Endothelial cell of umbilical vein (primary cell): ENCODE measurements at regions of chr5 and their contacts with region 1.

Region 1: DNA sequence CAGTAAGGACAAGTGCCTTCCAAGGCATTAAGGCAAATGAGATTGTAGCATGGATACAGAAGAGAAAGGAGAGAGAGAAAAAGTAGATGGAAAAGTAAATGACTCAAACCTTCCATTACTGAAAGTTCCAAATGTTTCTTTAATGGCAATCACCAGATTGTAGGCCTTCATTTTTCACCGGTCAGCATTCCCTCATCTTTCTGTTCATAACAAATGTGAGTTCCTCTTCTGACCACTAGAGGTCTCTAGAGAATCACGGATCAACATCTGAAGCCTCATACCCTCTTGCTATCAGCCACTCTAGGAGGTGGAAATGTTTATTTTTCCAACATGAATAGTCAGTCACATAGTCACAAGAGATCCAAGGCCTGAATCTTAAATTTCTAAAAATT is 73.6 kb upstream of the RPS23 start:
- DNase-seq: peak; percentile 85
- H3K4me3 ChIP-seq: no peak overlapping the region
- H3K27ac ChIP-seq: peak overlapping the region; percentile 63
- H3K4me1 ChIP-seq: peaks cover 28% of the 10 kb centered on the region
- H3K27me3 ChIP-seq: no peaks in the 10 kb centered on the region
- CTCF ChIP-seq: peak; percentile 54 to 58
- POLR2A ChIP-seq: no peak

Region 2: DNA sequence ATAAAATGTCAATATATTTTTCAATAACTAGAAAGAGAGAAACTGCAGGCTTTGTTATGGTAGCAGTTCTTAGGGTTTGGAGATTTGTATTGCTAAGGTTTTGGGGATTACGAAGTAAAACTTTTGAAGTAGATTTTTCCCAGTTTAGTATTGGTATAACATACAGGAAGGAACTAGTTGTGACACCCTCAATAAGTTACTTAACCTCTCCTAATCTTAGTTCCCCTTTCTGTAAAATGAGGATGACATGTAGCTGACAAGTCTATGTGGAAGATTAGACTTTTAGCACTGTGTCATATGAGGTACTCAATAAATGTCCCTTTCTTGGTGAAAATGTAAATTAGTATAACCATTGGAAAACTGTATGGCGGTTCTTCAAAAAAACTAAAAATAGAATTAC is 453.3 kb before region 1 on chr5:
- CTCF ChIA-PET with region 1: no interaction called
- POLR2A ChIA-PET with region 1: no interaction called
- dilution Hi-C with region 1: no loop called
- intact Hi-C with region 1: no loop called
- DNase-seq: no peak
- H3K4me3 ChIP-seq: no peak overlapping the region
- H3K27ac ChIP-seq: no peak overlapping the region
- H3K4me1 ChIP-seq: no peaks in the 10 kb centered on the region
- H3K27me3 ChIP-seq: peaks cover 0 to 3% of the 10 kb centered on the region in 2 experiments
- CTCF ChIP-seq: no peak
- POLR2A ChIP-seq: no peak

Region 3: DNA sequence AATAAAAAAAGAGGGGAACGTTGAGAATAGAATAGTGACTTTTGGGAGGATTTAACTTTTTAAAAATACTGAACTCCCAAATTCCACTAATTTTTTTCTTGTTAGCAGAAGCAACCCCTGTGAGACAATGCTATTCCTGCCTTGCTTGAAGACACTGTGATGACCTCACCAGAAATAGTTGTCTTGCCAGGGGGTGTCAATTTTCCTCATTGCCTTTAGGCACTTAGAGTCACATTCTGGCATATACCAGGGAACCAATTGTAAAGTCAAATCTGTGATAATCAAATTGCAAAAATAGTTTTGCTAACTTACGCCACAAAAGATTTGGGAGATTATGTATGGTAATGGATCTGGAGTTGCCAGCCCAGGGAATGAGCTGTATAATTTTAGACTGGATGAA is 30.8 kb before region 1 on chr5:
- CTCF ChIA-PET with region 1: no interaction called
- POLR2A ChIA-PET with region 1: no interaction called
- dilution Hi-C with region 1: no loop called
- intact Hi-C with region 1: no loop called
- DNase-seq: no peak
- H3K4me3 ChIP-seq: no peak overlapping the region
- H3K27ac ChIP-seq: no peak overlapping the region
- H3K4me1 ChIP-seq: no peaks in the 10 kb centered on the region
- H3K27me3 ChIP-seq: peaks cover 22 to 26% of the 10 kb centered on the region in 2 experiments
- CTCF ChIP-seq: no peak
- POLR2A ChIP-seq: no peak

Region 4: DNA sequence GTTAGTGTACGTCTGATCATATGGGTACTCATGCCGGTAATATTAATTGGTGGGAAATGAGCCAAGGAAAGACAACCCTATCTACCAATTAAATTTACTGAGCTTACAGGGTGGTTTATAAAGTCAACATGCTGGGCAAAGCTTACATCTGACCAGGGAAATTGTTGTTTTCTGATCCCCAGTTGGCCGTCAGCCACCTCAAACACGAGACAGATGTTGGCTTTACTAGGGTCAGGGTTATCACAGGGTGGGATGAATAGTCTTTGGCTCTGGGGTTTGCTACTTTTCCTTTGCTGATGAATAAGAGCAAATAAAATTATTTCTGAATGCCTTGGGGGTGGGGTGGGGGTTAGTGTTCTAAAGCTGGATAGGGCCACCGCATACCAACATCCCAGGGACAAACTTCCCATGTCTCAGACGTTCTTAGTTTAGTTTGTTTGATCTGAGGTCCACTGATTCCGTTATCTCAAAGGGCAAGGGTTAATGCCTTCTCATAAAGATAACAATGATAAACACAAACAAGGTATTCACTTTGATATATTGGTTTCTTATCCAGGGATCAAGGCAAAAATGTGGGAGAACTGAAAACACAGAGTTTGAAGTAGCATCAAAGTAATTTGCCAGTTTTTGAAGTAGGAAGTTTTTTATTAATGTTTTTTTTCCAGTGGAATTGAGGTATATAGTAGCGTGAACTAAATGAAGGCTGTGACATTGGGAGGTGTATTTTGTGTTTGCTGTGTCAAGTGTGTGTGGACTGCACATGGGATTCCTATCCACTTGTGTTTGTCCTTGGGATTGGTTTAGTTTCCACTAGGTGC is 35.5 kb after region 1 on chr5:
- CTCF ChIA-PET with region 1: interaction called, 6 read pairs
- POLR2A ChIA-PET with region 1: no interaction called
- dilution Hi-C with region 1: no loop called
- intact Hi-C with region 1: loop called (anchors 1 kb)
- DNase-seq: peak; percentile 99
- H3K4me3 ChIP-seq: no peak overlapping the region
- H3K27ac ChIP-seq: peak overlapping the region; percentile 59
- H3K4me1 ChIP-seq: peaks cover 39% of the 10 kb centered on the region
- H3K27me3 ChIP-seq: no peaks in the 10 kb centered on the region
- CTCF ChIP-seq: no peak
- POLR2A ChIP-seq: no peak

Region 5: DNA sequence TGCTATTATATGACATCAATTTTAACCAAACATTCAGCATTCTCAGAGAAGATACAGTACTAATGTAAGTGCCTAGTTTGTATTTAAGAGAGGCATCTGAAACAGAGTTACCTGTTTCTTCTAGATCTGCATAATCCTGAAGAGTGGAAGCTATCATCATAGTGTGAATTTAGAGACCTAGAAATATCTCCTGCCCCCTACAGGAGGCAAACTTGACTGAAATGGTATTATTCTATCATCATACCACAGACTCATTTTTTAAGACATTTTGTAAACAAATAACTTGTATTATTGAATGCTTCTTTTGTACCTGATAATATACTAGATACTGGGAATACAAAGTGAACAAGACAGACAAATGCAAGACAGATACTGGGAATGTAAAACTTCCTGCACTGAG is 143.2 kb after region 1 on chr5:
- CTCF ChIA-PET with region 1: interaction called, 8 read pairs
- POLR2A ChIA-PET with region 1: no interaction called
- dilution Hi-C with region 1: no loop called
- intact Hi-C with region 1: loop called (anchors 1 kb)
- DNase-seq: peak; percentile 30
- H3K4me3 ChIP-seq: no peak overlapping the region
- H3K27ac ChIP-seq: no peak overlapping the region
- H3K4me1 ChIP-seq: no peaks in the 10 kb centered on the region
- H3K27me3 ChIP-seq: peaks cover 0 to 2% of the 10 kb centered on the region in 2 experiments
- CTCF ChIP-seq: peak in 1 of 2 donors; percentile 6
- POLR2A ChIP-seq: no peak

Region 6: DNA sequence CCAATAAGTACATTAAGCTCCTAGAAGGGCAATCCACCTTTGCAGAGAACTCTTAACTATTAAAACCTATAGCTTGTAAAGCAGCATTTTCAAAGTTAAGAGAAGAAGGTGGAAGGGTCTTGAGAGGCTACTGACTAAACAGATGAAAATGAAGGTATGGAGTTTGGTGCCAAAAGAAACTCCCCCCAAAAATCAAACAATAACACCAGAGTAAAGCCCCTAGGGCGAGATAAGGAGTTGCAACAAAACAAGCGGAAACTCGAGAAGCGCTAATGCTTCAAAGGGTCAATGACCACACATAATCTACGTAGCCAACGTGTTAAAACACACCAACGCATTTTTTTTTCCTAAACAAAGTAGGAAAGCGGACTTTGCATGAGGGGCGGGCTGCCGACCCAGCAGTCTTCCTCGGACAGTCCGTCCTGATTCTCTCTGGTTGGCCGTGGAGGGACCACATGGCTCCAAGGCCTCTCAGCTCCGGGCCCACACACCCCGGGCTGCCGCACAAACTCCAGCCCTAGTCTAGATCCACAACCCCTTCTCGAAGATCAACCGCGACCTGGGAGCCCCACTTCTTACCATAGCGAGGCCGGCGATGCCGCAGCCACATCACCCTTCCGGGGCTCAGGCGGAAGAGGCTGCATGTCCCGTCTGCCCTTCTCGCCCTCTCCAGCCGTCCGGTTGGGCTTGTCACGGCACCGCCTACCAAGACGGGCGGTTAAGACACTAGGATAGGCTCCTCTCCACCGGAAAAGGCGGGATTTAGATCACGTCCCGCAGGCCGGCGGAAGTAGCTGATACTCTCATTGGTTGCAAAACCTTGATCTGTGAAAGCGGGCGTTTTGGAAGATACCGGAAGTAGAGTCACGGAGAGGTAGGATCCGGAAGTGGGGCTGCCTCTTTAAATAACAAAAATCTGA is 725.3 kb after region 1 on chr5 and contains the starts of genes TMEM167A and XRCC4:
- CTCF ChIA-PET with region 1: no interaction called
- POLR2A ChIA-PET with region 1: no interaction called
- dilution Hi-C with region 1: no loop called
- intact Hi-C with region 1: loop called (anchors 2 kb)
- DNase-seq: peak; percentile 97
- H3K4me3 ChIP-seq: peak within 1 kb of the TSS; percentile 69 to 98 (median 93)
- H3K27ac ChIP-seq: peak within 1 kb of the TSS; percentile 85
- H3K4me1 ChIP-seq: peaks cover 14% of the 10 kb centered on the region
- H3K27me3 ChIP-seq: no peaks in the 10 kb centered on the region
- CTCF ChIP-seq: no peak
- POLR2A ChIP-seq: peak; percentile 77
- total RNA-seq, gene TMEM167A: 64.4 and 69.4 TPM in 2 replicates
- total RNA-seq, gene XRCC4: 7.6 and 7.7 TPM in 2 replicates

Region 7: DNA sequence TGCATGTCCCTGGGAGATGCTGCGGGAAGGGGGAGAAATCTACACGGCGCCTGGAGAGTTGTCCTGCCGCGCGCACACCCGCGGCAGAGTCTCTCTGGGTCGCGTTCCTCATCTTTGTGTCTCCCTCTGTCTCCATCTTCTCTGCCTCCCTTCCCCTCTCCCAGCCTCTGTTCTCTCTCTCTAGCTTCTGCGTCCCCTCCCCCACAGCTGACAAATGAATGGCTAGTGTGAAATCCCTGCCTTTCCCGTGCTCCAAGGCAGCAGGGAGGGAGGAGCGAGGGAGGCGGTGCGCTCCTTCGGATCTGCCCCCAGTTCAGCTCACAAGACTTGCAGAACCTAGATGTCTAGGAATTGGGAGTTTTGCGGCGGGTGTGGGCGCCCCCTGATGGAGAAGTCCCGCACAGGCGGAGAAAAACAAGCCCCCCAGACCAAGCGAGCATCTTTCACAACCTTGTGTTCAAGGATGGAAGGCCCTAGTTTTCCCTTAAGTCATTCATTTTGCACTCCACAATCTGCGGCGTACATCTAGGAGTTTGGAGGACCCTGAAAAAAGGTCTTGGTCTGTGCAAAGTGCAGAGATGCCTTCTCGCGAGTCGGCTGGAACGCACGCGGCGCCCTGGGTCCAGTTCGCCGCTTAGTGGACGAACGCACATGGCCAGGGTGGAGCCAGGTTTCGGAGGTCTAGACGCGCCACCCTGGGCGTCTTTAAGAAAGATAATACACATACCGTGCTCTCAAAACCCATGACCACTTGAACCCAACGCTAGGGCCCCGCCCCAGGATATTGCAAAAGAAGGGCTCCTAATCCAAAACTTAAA is 1121.8 kb after region 1 on chr5:
- CTCF ChIA-PET with region 1: interaction called, 8 read pairs
- POLR2A ChIA-PET with region 1: no interaction called
- dilution Hi-C with region 1: no loop called
- intact Hi-C with region 1: loop called (anchors 1 kb)
- DNase-seq: peak; percentile 87
- H3K4me3 ChIP-seq: peak overlapping the region; percentile 48 to 73 (median 59)
- H3K27ac ChIP-seq: no peak overlapping the region
- H3K4me1 ChIP-seq: peaks cover 35% of the 10 kb centered on the region
- H3K27me3 ChIP-seq: peaks cover 49 to 74% of the 10 kb centered on the region in 2 experiments
- CTCF ChIP-seq: peak; percentile 86
- POLR2A ChIP-seq: no peak